AG04450 (cell line): ENCODE measurements at regions of chr2 and their contacts with region 1.

Region 1: GRCh38 chr2:172931918-172932520 is 143.6 kb upstream of the MAP3K20 start:
- DNase-seq: peak; percentile 49
- H3K4me3 ChIP-seq: no peak overlapping the region
- H3K27ac ChIP-seq: no peak overlapping the region
- H3K27me3 ChIP-seq: no peaks in the 10 kb centered on the region
- CTCF ChIP-seq: peak; percentile 78

Region 2: GRCh38 chr2:172806493-172806892 is 125.5 kb before region 1 on chr2:
- CTCF ChIA-PET with region 1: interaction called, 187 read pairs
- POLR2A ChIA-PET with region 1: no interaction called
- DNase-seq: peak; percentile 29
- H3K4me3 ChIP-seq: no peak overlapping the region
- H3K27ac ChIP-seq: no peak overlapping the region
- H3K27me3 ChIP-seq: no peaks in the 10 kb centered on the region
- CTCF ChIP-seq: peak; percentile 96

Region 3: DNA sequence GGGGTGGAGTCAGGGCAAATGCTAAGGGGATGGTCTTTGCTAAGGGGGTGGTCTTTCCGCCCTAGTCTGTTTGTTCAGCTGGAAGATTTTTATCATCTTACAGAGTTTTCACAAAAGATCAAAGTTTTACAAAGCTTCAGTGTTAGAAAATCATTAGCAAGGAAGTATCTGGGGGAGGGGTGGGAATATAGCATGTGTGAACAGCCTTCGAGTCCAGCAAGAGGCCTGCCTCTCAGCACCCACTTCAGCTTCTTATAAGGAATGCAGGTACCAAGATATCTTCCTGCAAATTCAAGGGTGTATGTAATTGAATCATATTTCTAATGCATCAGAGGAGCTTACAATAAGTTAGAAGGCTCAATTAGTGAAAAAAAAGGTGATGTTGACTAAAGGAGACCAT is 83.5 kb before region 1 on chr2:
- CTCF ChIA-PET with region 1: interaction called, 11 read pairs
- POLR2A ChIA-PET with region 1: interaction called, 3 read pairs
- DNase-seq: no peak
- H3K4me3 ChIP-seq: no peak overlapping the region
- H3K27ac ChIP-seq: no peak overlapping the region
- H3K27me3 ChIP-seq: no peaks in the 10 kb centered on the region
- CTCF ChIP-seq: no peak

Region 4: GRCh38 chr2:172901913-172902312 is 30.1 kb before region 1 on chr2:
- CTCF ChIA-PET with region 1: interaction called, 14 read pairs
- POLR2A ChIA-PET with region 1: no interaction called
- DNase-seq: no peak
- H3K4me3 ChIP-seq: no peak overlapping the region
- H3K27ac ChIP-seq: no peak overlapping the region
- H3K27me3 ChIP-seq: peaks cover 24% of the 10 kb centered on the region
- CTCF ChIP-seq: no peak

Region 5: GRCh38 chr2:172944022-172944793 is 12.2 kb after region 1 on chr2:
- CTCF ChIA-PET with region 1: interaction called, 39 read pairs
- POLR2A ChIA-PET with region 1: no interaction called
- DNase-seq: no peak
- H3K4me3 ChIP-seq: no peak overlapping the region
- H3K27ac ChIP-seq: no peak overlapping the region
- H3K27me3 ChIP-seq: no peaks in the 10 kb centered on the region
- CTCF ChIP-seq: no peak

Region 6: DNA sequence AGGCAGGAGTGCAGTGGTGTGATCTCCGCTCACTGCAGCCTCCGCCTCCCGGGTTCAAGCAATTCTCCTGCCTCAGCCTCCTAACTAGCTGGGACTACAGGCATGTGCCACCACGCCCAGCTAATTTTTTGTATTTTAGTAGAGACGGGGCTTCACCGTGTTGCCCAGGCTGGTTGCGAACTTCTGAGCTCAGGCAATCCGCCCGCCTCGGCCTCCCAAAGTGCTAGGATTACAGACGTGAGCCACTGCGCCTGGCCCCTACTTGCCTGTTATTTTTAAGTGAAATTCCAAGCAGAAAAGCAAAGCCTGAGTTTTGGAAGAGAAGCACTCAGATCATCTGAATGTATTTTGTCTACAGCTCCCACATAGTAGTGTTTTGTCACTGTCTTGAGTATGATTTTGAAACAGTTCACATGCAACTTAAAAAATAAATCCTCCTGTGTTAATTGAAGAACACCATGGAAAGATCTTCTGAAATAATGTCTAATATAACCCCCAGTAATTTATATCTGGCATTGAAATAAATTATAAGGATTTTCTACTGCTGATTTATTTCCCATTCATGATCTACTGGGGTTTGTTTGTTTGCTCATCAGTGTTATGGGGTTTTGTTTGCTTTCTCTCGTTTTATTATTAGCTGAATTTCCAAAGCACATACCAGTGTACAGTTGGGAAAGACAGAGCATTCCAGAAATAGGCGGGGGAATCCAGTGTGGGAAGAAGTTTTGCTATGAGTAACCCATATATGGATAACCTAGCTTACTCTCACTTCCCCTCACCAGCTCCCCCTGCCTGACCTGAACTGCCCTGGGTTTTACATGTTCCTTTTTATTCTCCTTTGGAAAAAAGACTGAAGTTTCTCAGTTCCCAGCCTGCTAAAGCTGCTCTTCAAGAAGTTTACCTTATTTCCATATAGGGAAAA is 63.6 kb after region 1 on chr2:
- CTCF ChIA-PET with region 1: interaction called, 11 read pairs
- POLR2A ChIA-PET with region 1: no interaction called
- DNase-seq: peak; percentile 87
- H3K4me3 ChIP-seq: no peak overlapping the region
- H3K27ac ChIP-seq: peak overlapping the region; percentile 65
- H3K27me3 ChIP-seq: no peaks in the 10 kb centered on the region
- CTCF ChIP-seq: peak; percentile 58